ENCODE measurements at regions of chr16 and their contacts with region 1.

Region 1: GRCh38 chr16:48609652-48610029 is 339 bp downstream of the N4BP1 start:
- DNase-seq: no peak
- H3K4me3 Mint-ChIP-seq: no peak overlapping the region
- H3K27ac Mint-ChIP-seq: peak overlapping the region; percentile 92
- H3K4me1 Mint-ChIP-seq: peaks cover 37% of the 10 kb centered on the region
- H3K27me3 Mint-ChIP-seq: no peaks in the 10 kb centered on the region

Region 2: GRCh38 chr16:46822270-46822669 is 1787.4 kb before region 1 on chr16:
- intact Hi-C with region 1: loop called (anchors 10 kb)
- DNase-seq: peak; percentile 65
- H3K4me3 Mint-ChIP-seq: no peak overlapping the region
- H3K27ac Mint-ChIP-seq: no peak overlapping the region
- H3K4me1 Mint-ChIP-seq: peaks cover 26% of the 10 kb centered on the region
- H3K27me3 Mint-ChIP-seq: no peaks in the 10 kb centered on the region

Region 3: DNA sequence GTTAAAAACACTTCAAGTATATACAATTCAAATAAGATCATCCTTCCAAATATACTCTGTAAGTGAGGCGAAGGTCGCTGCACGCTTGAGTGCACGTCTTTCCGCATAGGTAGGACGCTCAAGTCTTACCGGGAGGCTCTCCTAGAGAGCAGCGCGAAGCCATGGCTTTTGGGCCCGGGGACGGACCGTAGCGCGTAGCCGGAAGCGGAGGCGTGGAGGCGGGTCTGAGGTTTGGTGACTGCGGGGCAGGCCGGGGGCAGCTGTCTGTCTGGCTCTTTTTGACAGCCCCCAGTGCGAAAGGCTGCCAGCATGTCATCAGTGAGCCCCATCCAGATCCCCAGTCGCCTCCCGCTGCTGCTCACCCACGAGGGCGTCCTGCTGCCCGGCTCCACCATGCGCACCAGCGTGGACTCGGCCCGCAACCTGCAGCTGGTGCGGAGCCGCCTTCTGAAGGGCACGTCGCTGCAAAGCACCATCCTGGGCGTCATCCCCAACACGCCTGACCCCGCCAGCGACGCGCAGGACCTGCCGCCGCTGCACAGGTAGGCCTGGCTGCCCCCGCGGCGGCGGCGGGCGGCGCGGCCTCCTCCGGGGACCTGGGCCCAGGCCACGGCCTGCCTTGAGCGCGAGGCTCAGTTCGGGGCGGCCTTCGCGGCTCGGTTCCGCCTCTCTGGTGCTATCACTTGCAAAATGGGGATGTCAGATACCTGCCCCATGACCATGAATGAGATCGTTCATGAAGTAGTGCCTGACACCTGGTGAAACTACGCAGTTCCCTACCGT is 365.4 kb before region 1 on chr16 and contains the start of gene LONP2:
- intact Hi-C with region 1: loop called (anchors 5 kb)
- DNase-seq: peak; percentile 98
- H3K4me3 Mint-ChIP-seq: peak within 1 kb of the TSS; percentile 90
- H3K27ac Mint-ChIP-seq: peak within 1 kb of the TSS; percentile 91
- H3K4me1 Mint-ChIP-seq: peaks cover 16% of the 10 kb centered on the region
- H3K27me3 Mint-ChIP-seq: peaks cover 2% of the 10 kb centered on the region
- total RNA-seq, gene LONP2: 57.3 and 58.9 TPM in 2 replicates

Region 4: GRCh38 chr16:48459167-48459566 is 150.5 kb before region 1 on chr16:
- intact Hi-C with region 1: loop called (anchors 2 kb)
- DNase-seq: no peak
- H3K4me3 Mint-ChIP-seq: no peak overlapping the region
- H3K27ac Mint-ChIP-seq: peak overlapping the region; percentile 22
- H3K4me1 Mint-ChIP-seq: peaks cover 12% of the 10 kb centered on the region
- H3K27me3 Mint-ChIP-seq: peaks cover 24% of the 10 kb centered on the region

Region 5: DNA sequence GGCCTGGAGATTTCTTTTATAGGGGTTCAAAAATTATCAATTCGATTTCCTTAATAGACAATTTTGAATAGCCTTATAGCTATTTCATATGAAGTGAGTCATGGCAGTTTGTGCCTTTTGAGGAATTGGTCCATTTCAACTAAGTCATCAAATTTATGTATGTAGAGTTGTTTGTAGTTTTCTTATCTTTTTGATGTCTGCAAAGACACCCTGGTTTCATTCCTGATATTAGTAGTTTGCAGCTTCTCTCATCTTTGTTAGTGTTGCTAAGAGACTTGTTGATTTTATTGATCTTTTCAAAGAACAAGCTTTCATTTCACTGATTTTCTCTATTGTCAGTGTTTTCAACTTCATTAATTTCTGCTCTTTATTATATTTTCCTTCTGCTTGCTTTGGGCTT is 43.9 kb before region 1 on chr16:
- intact Hi-C with region 1: loop called (anchors 1 kb)
- DNase-seq: no peak
- H3K4me3 Mint-ChIP-seq: no peak overlapping the region
- H3K27ac Mint-ChIP-seq: peak overlapping the region; percentile 74
- H3K4me1 Mint-ChIP-seq: peaks cover 45% of the 10 kb centered on the region
- H3K27me3 Mint-ChIP-seq: no peaks in the 10 kb centered on the region

Region 6: DNA sequence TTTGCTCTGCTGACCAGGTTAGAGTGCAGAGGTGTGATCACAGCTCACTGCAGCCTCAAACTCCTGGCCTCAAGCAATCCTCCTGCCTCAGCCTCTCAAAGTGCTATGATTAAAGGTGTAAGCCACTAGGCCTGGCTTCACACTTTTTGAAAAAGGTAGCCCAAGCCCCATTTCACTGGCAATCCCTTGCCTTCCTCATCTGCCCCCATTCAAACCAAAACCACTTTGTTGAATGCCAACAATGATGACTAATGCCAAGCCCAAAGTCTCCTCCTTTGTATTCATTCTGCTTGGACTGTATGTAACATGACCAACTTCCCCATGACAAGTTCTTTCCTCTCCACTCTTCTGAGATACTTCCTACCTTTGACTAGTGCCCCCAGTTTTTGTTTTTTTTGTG is 32.7 kb before region 1 on chr16:
- intact Hi-C with region 1: no loop called
- DNase-seq: no peak
- H3K4me3 Mint-ChIP-seq: peak overlapping the region; percentile 16
- H3K27ac Mint-ChIP-seq: peak overlapping the region; percentile 81
- H3K4me1 Mint-ChIP-seq: peaks cover 39% of the 10 kb centered on the region
- H3K27me3 Mint-ChIP-seq: no peaks in the 10 kb centered on the region

Region 7: GRCh38 chr16:48590476-48590875 is 19.2 kb before region 1 on chr16:
- intact Hi-C with region 1: no loop called
- DNase-seq: no peak
- H3K4me3 Mint-ChIP-seq: no peak overlapping the region
- H3K27ac Mint-ChIP-seq: peak overlapping the region; percentile 59
- H3K4me1 Mint-ChIP-seq: peaks cover 21% of the 10 kb centered on the region
- H3K27me3 Mint-ChIP-seq: no peaks in the 10 kb centered on the region

Region 8: GRCh38 chr16:48623304-48624016 is 13.8 kb after region 1 on chr16:
- intact Hi-C with region 1: loop called (anchors 1 kb)
- DNase-seq: peak; percentile 96
- H3K4me3 Mint-ChIP-seq: peak overlapping the region; percentile 80
- H3K27ac Mint-ChIP-seq: peak overlapping the region; percentile 79
- H3K4me1 Mint-ChIP-seq: peaks cover 25% of the 10 kb centered on the region
- H3K27me3 Mint-ChIP-seq: peaks cover 10% of the 10 kb centered on the region

Region 9: GRCh38 chr16:48676836-48677235 is 67.2 kb after region 1 on chr16:
- intact Hi-C with region 1: no loop called
- DNase-seq: no peak
- H3K4me3 Mint-ChIP-seq: no peak overlapping the region
- H3K27ac Mint-ChIP-seq: no peak overlapping the region
- H3K4me1 Mint-ChIP-seq: no peaks in the 10 kb centered on the region
- H3K27me3 Mint-ChIP-seq: no peaks in the 10 kb centered on the region

Region 10: GRCh38 chr16:48687421-48688038 is 77.9 kb after region 1 on chr16:
- intact Hi-C with region 1: no loop called
- DNase-seq: peak; percentile 76
- H3K4me3 Mint-ChIP-seq: no peak overlapping the region
- H3K27ac Mint-ChIP-seq: no peak overlapping the region
- H3K4me1 Mint-ChIP-seq: peaks cover 9% of the 10 kb centered on the region
- H3K27me3 Mint-ChIP-seq: peaks cover 14% of the 10 kb centered on the region